ENCODE measurements at regions of chr7 and their contacts with region 1.

Region 1: GRCh38 chr7:150368096-150368883 is at the start of gene REPIN1:
- DNase-seq: peak; percentile 84
- H3K4me3 Mint-ChIP-seq: peak within 1 kb of the TSS; percentile 87
- H3K27ac Mint-ChIP-seq: peak within 1 kb of the TSS; percentile 79
- H3K4me1 Mint-ChIP-seq: peaks cover 38% of the 10 kb centered on the region
- H3K27me3 Mint-ChIP-seq: no peaks in the 10 kb centered on the region
- total RNA-seq, gene REPIN1: 42.9 to 45.9 TPM

Region 2: GRCh38 chr7:150356265-150356897 is 11.9 kb before region 1 on chr7:
- CTCF ChIA-PET with region 1: interaction called, 17 read pairs
- POLR2A ChIA-PET with region 1: interaction called, 7 read pairs
- DNase-seq: no peak
- H3K4me3 Mint-ChIP-seq: no peak overlapping the region
- H3K27ac Mint-ChIP-seq: peak overlapping the region; percentile 13
- H3K4me1 Mint-ChIP-seq: peaks cover 43% of the 10 kb centered on the region
- H3K27me3 Mint-ChIP-seq: no peaks in the 10 kb centered on the region

Region 3: GRCh38 chr7:150378853-150379440 is 10.7 kb after region 1 on chr7 and contains the start of gene ZNF775:
- CTCF ChIA-PET with region 1: interaction called, 4 read pairs
- POLR2A ChIA-PET with region 1: interaction called, 47 read pairs
- DNase-seq: peak; percentile 95
- H3K4me3 Mint-ChIP-seq: peak within 1 kb of the TSS; percentile 80
- H3K27ac Mint-ChIP-seq: peak within 1 kb of the TSS; percentile 72
- H3K4me1 Mint-ChIP-seq: peaks cover 48% of the 10 kb centered on the region
- H3K27me3 Mint-ChIP-seq: no peaks in the 10 kb centered on the region
- total RNA-seq, gene ZNF775: 6.4 to 7.1 TPM

Region 4: DNA sequence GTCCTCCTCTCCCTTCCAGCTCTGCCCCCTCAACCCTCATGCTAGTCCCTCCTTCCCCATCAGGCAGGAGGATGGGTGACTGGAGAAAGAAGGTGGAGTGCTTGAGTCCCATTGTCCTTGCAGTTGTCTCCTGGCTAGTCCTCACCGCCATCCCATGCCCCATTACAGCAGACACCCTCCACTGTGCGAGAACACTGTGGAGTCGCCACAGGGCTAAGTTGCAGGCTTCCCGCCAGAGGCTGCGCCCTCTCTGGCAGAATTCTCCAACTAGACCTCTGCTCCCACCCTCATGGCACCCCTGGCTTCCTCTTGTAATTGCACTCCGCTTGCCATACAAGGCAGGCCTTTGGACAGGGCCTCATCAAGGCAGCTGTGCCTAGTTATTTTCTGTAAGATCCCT is 320.3 kb after region 1 on chr7:
- CTCF ChIA-PET with region 1: no interaction called
- POLR2A ChIA-PET with region 1: no interaction called
- DNase-seq: no peak
- H3K4me3 Mint-ChIP-seq: peak overlapping the region; percentile 38
- H3K27ac Mint-ChIP-seq: peak overlapping the region; percentile 8
- H3K4me1 Mint-ChIP-seq: peaks cover 63% of the 10 kb centered on the region
- H3K27me3 Mint-ChIP-seq: no peaks in the 10 kb centered on the region

Region 5: DNA sequence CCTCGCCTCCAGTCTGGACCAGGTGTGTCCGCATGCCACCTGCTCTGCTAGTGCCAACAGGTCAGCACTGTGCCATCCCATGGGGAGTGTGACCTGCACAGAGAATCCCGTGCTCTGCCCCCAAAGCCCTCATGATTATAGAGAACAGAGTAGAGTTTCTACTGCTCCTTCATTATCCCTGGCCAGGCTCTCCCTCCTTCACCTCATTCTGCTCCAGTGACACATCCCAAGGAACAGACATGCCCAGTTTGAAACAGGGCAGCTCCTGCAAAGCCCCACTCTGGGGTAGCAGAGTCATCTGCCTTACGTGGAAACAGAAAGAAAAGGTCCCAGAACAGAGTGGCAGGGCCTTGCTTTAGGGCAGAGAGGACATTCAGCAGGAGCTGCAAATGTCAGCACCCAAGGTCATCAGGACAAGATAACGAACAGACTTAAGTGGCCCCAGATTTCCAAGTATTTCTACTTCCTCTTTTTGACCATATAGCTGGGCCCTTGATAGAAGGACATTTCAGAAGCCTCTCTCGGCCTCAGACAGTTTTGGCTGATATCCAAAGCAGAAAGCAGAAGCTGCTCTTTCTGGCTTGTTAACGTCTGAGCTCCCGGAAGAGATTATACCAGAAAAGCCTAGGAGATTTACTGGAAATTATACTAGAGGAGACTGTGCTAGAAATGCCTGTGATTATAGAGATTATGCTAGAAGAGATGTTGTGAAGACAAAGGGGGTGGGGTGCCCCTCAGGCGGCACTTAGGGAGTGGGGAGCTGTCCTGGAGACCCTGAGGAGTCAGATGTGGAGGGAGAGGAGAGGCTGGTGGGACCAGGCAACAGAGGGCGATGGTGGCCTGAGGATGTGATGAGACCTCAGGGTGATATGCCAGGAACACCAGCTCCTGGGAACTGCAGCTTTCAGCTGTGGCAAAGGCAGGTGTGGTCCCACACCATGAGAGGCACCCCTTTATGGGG is 419.3 kb after region 1 on chr7:
- CTCF ChIA-PET with region 1: no interaction called
- POLR2A ChIA-PET with region 1: no interaction called
- DNase-seq: no peak
- H3K4me3 Mint-ChIP-seq: no peak overlapping the region
- H3K27ac Mint-ChIP-seq: no peak overlapping the region
- H3K4me1 Mint-ChIP-seq: peaks cover 8% of the 10 kb centered on the region
- H3K27me3 Mint-ChIP-seq: peaks cover 13% of the 10 kb centered on the region

Measured in activated CD4-positive, alpha-beta memory T cell treated with anti-CD3 and anti-CD28 coated beads, Interleukin-2, amount 10 ng/mL, durations not matched to agents 7 days and 5 days (primary cell).